Natural killer cell (primary cell): ENCODE measurements at regions of chr6 and their contacts with region 1.

Region 1: GRCh38 chr6:41182069-41183034 is 18.6 kb downstream of the TREML2 start:
- DNase-seq: peak in 1 of 2 donors; percentile 78
- ATAC-seq: peak; percentile 84 to 99 (median 95)
- H3K4me3 ChIP-seq: no peak overlapping the region
- H3K4me3 Mint-ChIP-seq: no peak overlapping the region
- H3K27ac ChIP-seq: peak overlapping the region; percentile 12
- H3K27ac Mint-ChIP-seq: peak overlapping the region in 1 of 2 donors; percentile 71
- H3K4me1 ChIP-seq: peaks cover 21% of the 10 kb centered on the region
- H3K4me1 Mint-ChIP-seq: peaks cover 9 to 22% of the 10 kb centered on the region in 2 donors
- H3K27me3 ChIP-seq: peaks cover 3% of the 10 kb centered on the region
- H3K27me3 Mint-ChIP-seq: peaks cover 2 to 8% of the 10 kb centered on the region in 2 donors
- CTCF ChIP-seq: peak; percentile 71

Region 2: GRCh38 chr6:41008011-41008410 is 174.3 kb before region 1 on chr6:
- intact Hi-C with region 1: loop called (anchors 5 kb)
- DNase-seq: no peak
- ATAC-seq: no peak
- H3K4me3 ChIP-seq: no peak overlapping the region
- H3K4me3 Mint-ChIP-seq: no peak overlapping the region
- H3K27ac ChIP-seq: no peak overlapping the region
- H3K27ac Mint-ChIP-seq: no peak overlapping the region
- H3K4me1 ChIP-seq: no peaks in the 10 kb centered on the region
- H3K4me1 Mint-ChIP-seq: no peaks in the 10 kb centered on the region
- H3K27me3 ChIP-seq: no peaks in the 10 kb centered on the region
- H3K27me3 Mint-ChIP-seq: peaks cover 18 to 28% of the 10 kb centered on the region in 2 donors
- CTCF ChIP-seq: no peak

Region 3: GRCh38 chr6:41157323-41157722 is 25.0 kb before region 1 on chr6:
- intact Hi-C with region 1: no loop called
- DNase-seq: no peak
- ATAC-seq: peak in 1 of 3 donors; percentile 10
- H3K4me3 ChIP-seq: no peak overlapping the region
- H3K4me3 Mint-ChIP-seq: no peak overlapping the region
- H3K27ac ChIP-seq: no peak overlapping the region
- H3K27ac Mint-ChIP-seq: no peak overlapping the region
- H3K4me1 ChIP-seq: peaks cover 5% of the 10 kb centered on the region
- H3K4me1 Mint-ChIP-seq: peaks cover 0 to 4% of the 10 kb centered on the region in 2 donors
- H3K27me3 ChIP-seq: no peaks in the 10 kb centered on the region
- H3K27me3 Mint-ChIP-seq: peaks cover 9% of the 10 kb centered on the region in 2 donors
- CTCF ChIP-seq: no peak

Region 4: DNA sequence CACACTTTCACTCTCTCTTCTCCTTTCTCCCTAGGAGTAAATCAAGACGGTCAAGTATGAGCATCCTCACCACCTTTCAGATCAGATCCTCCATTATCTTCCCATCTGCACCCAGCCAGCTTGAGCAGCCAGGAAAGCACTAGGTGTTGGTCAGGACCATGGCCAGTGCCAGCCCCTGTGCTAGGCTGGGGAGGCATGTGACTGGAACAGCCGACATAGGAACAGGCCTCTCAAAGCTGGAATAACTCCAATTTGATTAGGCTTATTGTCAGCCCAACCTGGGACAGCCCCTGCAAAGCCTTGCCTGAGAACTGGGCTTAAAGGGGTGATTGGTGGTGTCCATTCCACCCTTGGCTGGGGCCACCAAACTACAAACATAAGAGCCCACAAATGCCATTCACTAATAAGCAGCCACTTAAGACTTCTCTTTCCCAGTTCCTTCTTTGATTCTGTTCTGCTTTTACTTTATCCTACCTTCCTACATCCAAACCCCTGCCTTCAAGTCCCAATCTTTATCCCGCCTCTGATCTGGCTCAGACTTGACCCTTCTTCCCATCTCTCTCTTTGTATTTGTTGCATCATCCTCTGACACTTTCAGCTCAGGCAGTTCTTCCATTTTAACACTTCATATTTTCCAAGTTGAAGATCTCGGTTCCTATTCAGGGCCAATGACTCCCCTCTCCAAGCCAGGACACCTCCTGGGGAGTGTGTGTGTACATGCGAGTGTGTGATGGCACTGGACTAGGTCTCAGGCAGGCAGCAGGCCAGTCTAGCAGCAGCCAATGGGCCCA is 15.0 kb before region 1 on chr6:
- intact Hi-C with region 1: no loop called
- DNase-seq: no peak
- ATAC-seq: no peak
- H3K4me3 ChIP-seq: no peak overlapping the region
- H3K4me3 Mint-ChIP-seq: no peak overlapping the region
- H3K27ac ChIP-seq: no peak overlapping the region
- H3K27ac Mint-ChIP-seq: no peak overlapping the region
- H3K4me1 ChIP-seq: no peaks in the 10 kb centered on the region
- H3K4me1 Mint-ChIP-seq: peaks cover 5 to 10% of the 10 kb centered on the region in 2 donors
- H3K27me3 ChIP-seq: no peaks in the 10 kb centered on the region
- H3K27me3 Mint-ChIP-seq: peaks cover 22 to 35% of the 10 kb centered on the region in 2 donors
- CTCF ChIP-seq: no peak

Region 5: GRCh38 chr6:41257369-41258195 is 75.2 kb after region 1 on chr6:
- intact Hi-C with region 1: no loop called
- DNase-seq: no peak
- ATAC-seq: no peak
- H3K4me3 ChIP-seq: no peak overlapping the region
- H3K4me3 Mint-ChIP-seq: no peak overlapping the region
- H3K27ac ChIP-seq: no peak overlapping the region
- H3K27ac Mint-ChIP-seq: no peak overlapping the region
- H3K4me1 ChIP-seq: peaks cover 7% of the 10 kb centered on the region
- H3K4me1 Mint-ChIP-seq: peaks cover 9 to 16% of the 10 kb centered on the region in 2 donors
- H3K27me3 ChIP-seq: no peaks in the 10 kb centered on the region
- H3K27me3 Mint-ChIP-seq: peaks cover 0 to 3% of the 10 kb centered on the region in 2 donors
- CTCF ChIP-seq: no peak